Mammary epithelial cell (primary cell): ENCODE measurements at regions of chr15 and their contacts with region 1.

Region 1: DNA sequence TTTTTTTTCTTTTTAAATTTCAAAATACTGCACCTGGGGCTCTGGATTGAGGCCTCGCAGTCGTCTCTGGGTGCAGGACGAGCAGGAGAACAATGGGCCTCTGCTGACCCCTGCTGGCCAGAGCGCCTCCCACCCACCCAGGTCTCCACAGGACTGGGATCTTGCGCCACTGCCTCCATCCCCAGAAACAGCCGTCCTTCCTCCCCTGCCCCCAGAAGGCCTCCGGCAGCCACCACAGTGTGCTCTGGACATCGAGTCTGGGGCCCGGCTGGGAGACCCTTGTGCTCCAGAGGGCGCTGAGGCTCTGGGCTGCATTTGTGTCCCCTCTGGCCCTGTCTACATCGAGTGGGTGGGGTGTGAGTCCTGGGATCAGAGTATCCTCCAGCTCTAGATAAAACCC is 6.6 kb upstream of the ACSBG1 start:
- DNase-seq: peak; percentile 53
- H3K4me3 ChIP-seq: no peak overlapping the region
- H3K27ac ChIP-seq: no peak overlapping the region
- H3K4me1 ChIP-seq: peaks cover 7% of the 10 kb centered on the region
- H3K27me3 ChIP-seq: peaks cover 2% of the 10 kb centered on the region
- CTCF ChIP-seq: peak; percentile 68 to 93

Region 2: DNA sequence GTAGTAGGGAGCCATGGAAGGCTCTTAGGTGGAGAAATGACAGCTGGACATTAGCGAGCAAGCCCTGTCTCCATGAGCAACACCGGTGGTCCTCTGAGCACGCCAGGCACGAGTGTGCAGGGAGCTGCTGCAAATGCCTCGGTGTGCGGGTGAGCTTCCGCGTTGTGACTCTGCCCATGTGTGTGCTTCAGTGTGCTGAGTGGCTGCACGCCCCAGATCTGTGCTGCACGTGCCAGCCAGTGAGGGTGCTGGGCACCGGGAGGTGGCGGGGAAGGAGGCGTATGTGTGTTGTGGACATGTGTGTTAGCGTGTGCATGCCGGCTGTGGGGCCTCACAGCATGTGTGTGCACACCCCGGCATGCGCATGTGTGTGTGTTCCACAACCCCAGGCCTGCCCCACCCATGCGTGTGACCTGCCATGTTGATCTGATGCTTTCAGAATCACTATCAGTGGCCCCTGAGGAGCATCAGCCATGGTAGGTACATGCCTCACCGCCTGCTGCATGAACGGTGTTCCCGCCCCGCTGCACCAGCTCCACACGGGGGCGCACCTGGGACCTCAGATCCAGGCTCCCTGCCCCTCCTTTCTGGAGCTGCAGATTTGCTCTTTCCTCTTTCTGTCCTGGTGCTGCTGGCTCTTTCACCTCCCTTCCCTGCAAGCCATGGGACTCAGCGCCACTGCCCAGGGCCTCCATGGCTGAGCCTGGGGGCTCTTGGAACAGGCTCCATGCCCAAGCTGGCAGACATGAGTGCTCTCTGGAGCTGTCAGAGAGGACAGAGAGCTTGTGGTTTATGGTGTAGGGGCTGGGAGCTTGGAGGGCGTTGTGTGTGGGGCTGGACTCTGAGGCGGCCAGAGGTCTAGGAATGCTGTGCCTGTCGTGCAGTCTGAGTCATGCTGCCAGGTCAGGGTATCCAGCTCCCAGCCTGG is 332.9 kb before region 1 on chr15:
- CTCF ChIA-PET with region 1: no interaction called
- dilution Hi-C with region 1: no loop called
- in situ Hi-C with region 1: no loop called
- intact Hi-C with region 1: loop called (anchors 5 kb)
- DNase-seq: no peak
- H3K4me3 ChIP-seq: no peak overlapping the region
- H3K27ac ChIP-seq: no peak overlapping the region
- H3K4me1 ChIP-seq: peaks cover 3% of the 10 kb centered on the region
- H3K27me3 ChIP-seq: no peaks in the 10 kb centered on the region
- CTCF ChIP-seq: peak; percentile 29 to 51

Region 3: GRCh38 chr15:77966540-77967290 is 274.3 kb before region 1 on chr15:
- CTCF ChIA-PET with region 1: no interaction called
- dilution Hi-C with region 1: no loop called
- in situ Hi-C with region 1: loop called (anchors 10 to 25 kb)
- intact Hi-C with region 1: loop called (anchors 2 kb)
- DNase-seq: peak; percentile 24
- H3K4me3 ChIP-seq: no peak overlapping the region
- H3K27ac ChIP-seq: no peak overlapping the region
- H3K4me1 ChIP-seq: no peaks in the 10 kb centered on the region
- H3K27me3 ChIP-seq: no peaks in the 10 kb centered on the region
- CTCF ChIP-seq: peak; percentile 87 to 91

Region 4: GRCh38 chr15:78177447-78177873 is 63.5 kb before region 1 on chr15:
- CTCF ChIA-PET with region 1: no interaction called
- dilution Hi-C with region 1: no loop called
- in situ Hi-C with region 1: no loop called
- intact Hi-C with region 1: loop called (anchors 1 kb)
- DNase-seq: no peak
- H3K4me3 ChIP-seq: no peak overlapping the region
- H3K27ac ChIP-seq: no peak overlapping the region
- H3K4me1 ChIP-seq: peaks cover under 1% of the 10 kb centered on the region
- H3K27me3 ChIP-seq: no peaks in the 10 kb centered on the region
- CTCF ChIP-seq: peak; percentile 45 to 72

Region 5: DNA sequence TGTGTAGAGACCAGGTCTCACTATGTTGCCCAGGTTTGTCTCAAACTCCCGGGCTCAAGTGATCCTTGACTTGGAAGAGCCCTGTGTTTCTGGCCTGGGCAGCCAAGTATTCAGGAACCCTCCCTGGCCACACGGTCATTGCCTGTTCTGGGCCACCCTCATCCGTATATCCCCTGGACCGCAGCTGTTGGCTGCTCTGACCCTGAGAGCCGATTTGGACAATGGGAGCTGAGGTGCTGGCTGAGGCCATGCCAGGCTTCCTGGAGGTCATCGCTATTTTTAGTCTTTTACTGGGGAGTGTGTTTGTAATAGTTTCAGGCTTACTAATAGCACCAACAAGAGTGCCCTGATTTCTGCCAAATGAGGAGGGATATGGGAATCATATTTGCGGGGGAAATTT is 509.6 kb after region 1 on chr15:
- CTCF ChIA-PET with region 1: no interaction called
- dilution Hi-C with region 1: no loop called
- in situ Hi-C with region 1: no loop called
- intact Hi-C with region 1: loop called (anchors 5 kb)
- DNase-seq: no peak
- H3K4me3 ChIP-seq: no peak overlapping the region
- H3K27ac ChIP-seq: no peak overlapping the region
- H3K4me1 ChIP-seq: no peaks in the 10 kb centered on the region
- H3K27me3 ChIP-seq: no peaks in the 10 kb centered on the region
- CTCF ChIP-seq: no peak